Psoas muscle (tissue), 8 donors: ENCODE measurements at regions of chr19 and their contacts with region 1.

Region 1: GRCh38 chr19:40662921-40663694 is 27.3 kb downstream of the NUMBL start:
- DNase-seq: peak; percentile 93 to 95
- ATAC-seq: peak; percentile 89 to 95 (median 90)
- H3K4me3 ChIP-seq: peak overlapping the region; percentile 85
- H3K27ac ChIP-seq: peak overlapping the region; percentile 92
- H3K4me1 ChIP-seq: no peaks in the 10 kb centered on the region
- H3K27me3 ChIP-seq: no peaks in the 10 kb centered on the region
- CTCF ChIP-seq: no peak

Region 2: DNA sequence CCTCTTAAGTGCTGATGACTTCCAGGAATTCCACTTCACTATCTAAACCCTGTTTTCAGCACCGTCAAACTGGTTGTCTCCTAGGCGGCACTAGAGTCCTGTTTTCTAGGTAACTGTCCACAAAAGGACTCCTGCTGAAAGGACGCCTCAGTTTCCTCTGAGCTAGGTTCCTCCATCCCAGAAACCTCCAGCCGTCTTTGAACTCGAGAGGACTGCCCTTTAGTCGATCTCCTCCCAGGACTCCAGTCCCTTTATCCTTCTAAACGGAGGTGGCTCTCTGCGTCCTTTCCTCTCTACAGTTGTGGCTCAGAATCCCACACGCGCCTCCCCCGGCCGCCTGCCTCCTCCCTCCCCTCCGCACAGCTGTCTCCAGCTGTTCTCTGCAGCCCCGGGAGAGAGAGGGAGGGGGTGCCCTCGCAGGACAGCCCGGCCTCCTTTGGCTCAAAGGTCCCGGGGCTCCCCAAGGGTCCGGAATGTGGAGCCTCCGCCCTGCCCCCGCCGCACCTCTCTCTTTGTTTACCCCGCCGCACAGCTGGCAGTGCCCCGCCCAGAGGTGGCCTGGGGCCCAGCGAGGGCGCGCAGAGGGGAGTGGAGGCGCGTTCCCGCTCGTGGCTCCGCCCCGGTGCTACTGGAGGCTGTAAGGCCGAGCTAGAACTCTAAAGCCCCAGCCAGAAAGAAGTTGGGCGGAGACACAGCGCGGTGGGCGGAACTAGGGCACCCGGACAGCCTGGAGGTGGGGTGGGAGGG is 59.5 kb before region 1 on chr19:
- intact Hi-C with region 1: no loop called
- DNase-seq: peak; percentile 97 to 98
- ATAC-seq: peak; percentile 80 to 85 (median 85)
- H3K4me3 ChIP-seq: peak overlapping the region; percentile 67
- H3K27ac ChIP-seq: peak overlapping the region; percentile 60
- H3K4me1 ChIP-seq: peaks cover 45% of the 10 kb centered on the region
- H3K27me3 ChIP-seq: peaks cover 0 to 22% (median 10%) of the 10 kb centered on the region in 3 donors
- CTCF ChIP-seq: no peak

Region 3: GRCh38 chr19:40798223-40798996 is 135.3 kb after region 1 on chr19:
- intact Hi-C with region 1: loop called (anchors 5 to 10 kb)
- DNase-seq: peak; percentile 100
- ATAC-seq: peak; percentile 87 to 92 (median 90)
- H3K4me3 ChIP-seq: peak overlapping the region; percentile 95
- H3K27ac ChIP-seq: peak overlapping the region; percentile 89
- H3K4me1 ChIP-seq: peaks cover 34% of the 10 kb centered on the region
- H3K27me3 ChIP-seq: no peaks in the 10 kb centered on the region
- CTCF ChIP-seq: peak; percentile 26

Region 4: GRCh38 chr19:40806488-40807468 is 143.7 kb after region 1 on chr19:
- intact Hi-C with region 1: loop called (anchors 5 to 10 kb)
- DNase-seq: peak; percentile 84 to 88
- ATAC-seq: peak in 3 of 4 donors; percentile 40 to 49 (median 42)
- H3K4me3 ChIP-seq: peak overlapping the region; percentile 22
- H3K27ac ChIP-seq: peak overlapping the region; percentile 64
- H3K4me1 ChIP-seq: peaks cover 54% of the 10 kb centered on the region
- H3K27me3 ChIP-seq: no peaks in the 10 kb centered on the region
- CTCF ChIP-seq: peak; percentile 68

Region 5: DNA sequence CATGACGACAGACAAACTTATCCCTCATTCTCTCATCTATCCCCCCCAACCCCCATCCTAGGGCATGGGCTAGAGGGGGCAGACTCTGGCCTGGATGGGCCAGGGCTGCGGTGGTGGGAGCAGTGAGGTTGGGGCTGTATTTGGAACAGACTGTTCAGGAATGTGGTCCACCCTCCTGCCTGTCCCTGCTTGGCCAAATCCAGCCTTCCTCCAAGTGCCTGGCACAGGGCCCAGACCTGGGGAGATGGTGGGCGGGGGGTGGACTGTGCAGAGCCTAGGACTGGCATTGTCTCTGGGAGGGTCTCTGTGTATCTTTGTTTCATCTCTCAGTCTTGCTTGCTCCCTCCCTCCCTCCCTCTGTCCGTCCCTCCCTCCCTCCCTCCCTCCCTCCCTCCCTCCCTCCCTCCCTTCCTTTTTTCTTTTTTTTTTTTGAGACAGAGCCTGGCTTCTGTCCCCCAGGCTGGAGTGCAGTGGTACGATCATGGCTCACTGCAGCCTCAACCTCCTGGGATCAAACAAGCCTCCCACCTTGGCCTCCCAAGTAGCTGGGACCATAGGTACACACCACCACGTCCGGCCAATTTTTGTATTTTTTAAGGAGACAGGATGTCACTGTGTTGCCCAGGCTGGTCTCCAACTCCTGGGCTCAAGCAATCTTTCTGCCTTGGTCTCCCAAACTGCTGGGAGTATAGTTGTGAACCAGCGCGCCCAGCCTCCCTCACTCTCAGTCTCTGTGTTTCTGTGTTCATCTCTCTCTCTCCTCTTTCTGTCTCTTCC is 150.3 kb after region 1 on chr19:
- intact Hi-C with region 1: loop called (anchors 2 to 10 kb)
- DNase-seq: peak in 1 of 2 donors; percentile 54
- ATAC-seq: no peak
- H3K4me3 ChIP-seq: no peak overlapping the region
- H3K27ac ChIP-seq: no peak overlapping the region
- H3K4me1 ChIP-seq: peaks cover 8% of the 10 kb centered on the region
- H3K27me3 ChIP-seq: no peaks in the 10 kb centered on the region
- CTCF ChIP-seq: no peak

Region 6: DNA sequence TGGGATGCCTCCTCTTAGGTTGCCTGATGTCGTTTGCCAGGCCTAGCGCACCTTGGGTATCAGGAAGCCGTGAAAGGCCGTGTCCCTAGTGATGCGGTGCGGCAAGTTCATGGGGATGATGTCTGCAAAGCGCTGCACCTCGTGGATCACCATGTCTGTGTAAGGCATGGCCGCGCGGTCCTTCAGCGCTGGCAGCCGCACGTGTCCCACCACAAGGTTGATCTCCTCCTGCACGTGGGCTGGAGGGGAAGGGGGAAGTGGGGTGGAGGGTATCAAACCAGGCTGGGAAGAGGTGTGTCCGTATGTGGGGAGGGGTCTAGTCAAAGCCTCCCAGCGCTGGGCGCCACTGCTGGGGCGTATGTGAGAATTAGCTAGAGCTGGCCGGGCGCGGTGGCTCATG is 159.1 kb after region 1 on chr19:
- intact Hi-C with region 1: loop called (anchors 2 kb)
- DNase-seq: no peak
- ATAC-seq: no peak
- H3K4me3 ChIP-seq: no peak overlapping the region
- H3K27ac ChIP-seq: no peak overlapping the region
- H3K4me1 ChIP-seq: peaks cover 9% of the 10 kb centered on the region
- H3K27me3 ChIP-seq: no peaks in the 10 kb centered on the region
- CTCF ChIP-seq: no peak

Region 7: GRCh38 chr19:40908976-40909375 is 245.9 kb after region 1 on chr19:
- intact Hi-C with region 1: loop called in 1 of 2 experiments (anchors 2 kb)
- DNase-seq: no peak
- ATAC-seq: peak in 1 of 4 donors; percentile 48
- H3K4me3 ChIP-seq: no peak overlapping the region
- H3K27ac ChIP-seq: no peak overlapping the region
- H3K4me1 ChIP-seq: no peaks in the 10 kb centered on the region
- H3K27me3 ChIP-seq: peaks cover 0 to 18% (median 4%) of the 10 kb centered on the region in 3 donors
- CTCF ChIP-seq: peak; percentile 19

Region 8: DNA sequence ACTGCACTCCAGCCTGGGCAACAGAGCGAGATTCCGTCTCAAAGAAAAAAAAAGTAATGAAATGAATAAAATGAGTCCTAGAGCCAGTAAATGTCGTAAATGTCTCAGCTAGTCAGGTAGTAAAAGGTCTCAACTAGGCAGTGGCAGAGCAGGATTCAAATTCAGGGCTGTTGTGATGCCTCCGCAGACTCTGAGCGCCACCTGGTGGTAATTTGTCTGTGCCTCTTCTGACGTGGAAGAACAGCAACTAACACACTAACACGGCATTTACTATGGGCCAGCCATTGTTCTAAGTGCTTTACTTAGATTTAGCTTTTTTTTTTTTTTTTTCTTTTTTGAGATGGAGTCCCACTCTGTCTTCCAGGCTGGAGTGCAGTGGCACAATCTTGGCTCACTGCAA is 481.3 kb after region 1 on chr19:
- intact Hi-C with region 1: loop called in 1 of 2 experiments (anchors 10 kb)
- DNase-seq: peak; percentile 61 to 82
- ATAC-seq: peak in 1 of 4 donors; percentile 47
- H3K4me3 ChIP-seq: no peak overlapping the region
- H3K27ac ChIP-seq: no peak overlapping the region
- H3K4me1 ChIP-seq: no peaks in the 10 kb centered on the region
- H3K27me3 ChIP-seq: no peaks in the 10 kb centered on the region
- CTCF ChIP-seq: peak; percentile 64